ENCODE measurements at regions of chr3 and their contacts with region 1.

Region 1: GRCh38 chr3:33096093-33096868 is 665 bp downstream of the GLB1 start:
- H3K4me3 Mint-ChIP-seq: peak overlapping the region; percentile 97
- H3K27ac Mint-ChIP-seq: peak overlapping the region; percentile 98
- H3K4me1 Mint-ChIP-seq: peaks cover 51% of the 10 kb centered on the region
- H3K27me3 Mint-ChIP-seq: no peaks in the 10 kb centered on the region

Region 2: DNA sequence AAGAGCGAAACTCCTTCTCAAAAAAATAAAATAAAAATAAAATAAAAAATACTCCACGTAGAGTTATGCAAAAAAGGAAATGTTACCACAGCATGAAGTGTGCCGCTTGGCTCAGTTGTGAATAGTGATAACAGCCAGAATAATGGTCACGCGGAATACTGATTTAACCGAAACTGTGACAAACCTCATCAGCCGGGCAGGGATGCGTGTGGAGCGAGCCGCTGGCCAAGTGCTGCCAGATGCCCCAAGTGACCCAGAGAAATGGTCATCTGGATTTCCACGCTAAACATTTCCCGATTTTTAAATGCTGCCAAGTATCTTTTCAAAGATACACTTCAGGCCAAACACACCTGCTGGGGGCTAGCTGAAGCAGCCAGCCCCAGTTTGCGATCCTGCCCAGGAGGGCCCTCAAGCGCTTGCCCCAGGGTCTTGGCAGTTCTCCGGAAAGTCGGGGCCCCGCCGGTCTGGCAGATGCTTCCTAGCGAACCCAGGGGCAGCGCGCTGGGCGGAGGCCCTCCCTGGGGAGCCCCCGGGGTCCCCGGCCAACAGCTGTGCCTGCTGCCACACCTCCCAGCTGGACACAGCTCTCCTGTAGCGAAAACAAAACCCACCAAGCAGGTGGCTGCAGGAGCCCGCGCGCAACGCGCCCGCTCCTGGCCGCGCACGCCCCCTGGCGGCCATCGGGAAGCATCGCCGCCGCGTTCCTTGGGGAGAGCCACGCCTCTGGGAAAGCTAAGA is 628.8 kb before region 1 on chr3:
- intact Hi-C with region 1: no loop called
- H3K4me3 Mint-ChIP-seq: no peak overlapping the region
- H3K27ac Mint-ChIP-seq: no peak overlapping the region
- H3K4me1 Mint-ChIP-seq: peaks cover 60% of the 10 kb centered on the region
- H3K27me3 Mint-ChIP-seq: no peaks in the 10 kb centered on the region

Region 3: DNA sequence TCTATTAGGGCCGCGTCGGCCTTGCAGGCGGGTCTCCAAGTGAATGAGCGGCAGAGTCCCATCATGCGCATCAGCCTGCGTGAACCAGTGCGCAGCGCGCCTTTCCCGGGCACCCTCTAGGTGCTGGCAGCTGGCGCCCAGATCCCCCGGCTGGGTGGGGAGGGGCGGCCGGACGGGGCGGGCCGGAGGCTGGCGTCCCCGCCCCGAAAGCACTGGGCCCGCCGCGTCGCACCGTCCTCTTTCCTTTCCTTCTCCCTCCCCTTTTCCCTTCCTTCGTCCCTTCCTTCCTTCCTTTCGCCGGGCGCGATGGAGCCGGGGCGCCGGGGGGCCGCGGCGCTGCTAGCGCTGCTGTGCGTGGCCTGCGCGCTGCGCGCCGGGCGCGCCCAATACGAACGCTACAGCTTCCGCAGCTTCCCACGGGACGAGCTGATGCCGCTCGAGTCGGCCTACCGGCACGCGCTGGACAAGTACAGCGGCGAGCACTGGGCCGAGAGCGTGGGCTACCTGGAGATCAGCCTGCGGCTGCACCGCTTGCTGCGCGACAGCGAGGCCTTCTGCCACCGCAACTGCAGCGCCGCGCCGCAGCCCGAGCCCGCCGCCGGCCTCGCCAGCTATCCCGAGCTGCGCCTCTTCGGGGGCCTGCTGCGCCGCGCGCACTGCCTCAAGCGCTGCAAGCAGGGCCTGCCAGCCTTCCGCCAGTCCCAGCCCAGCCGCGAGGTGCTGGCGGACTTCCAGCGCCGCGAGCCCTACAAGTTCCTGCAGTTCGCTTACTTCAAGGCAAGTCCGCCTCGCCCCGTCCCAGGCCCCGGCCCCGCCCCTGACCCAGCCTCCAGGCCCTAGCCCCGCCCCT is 17.7 kb after region 1 on chr3 and contains the start of gene CRTAP:
- intact Hi-C with region 1: loop called (anchors 1 kb)
- H3K4me3 Mint-ChIP-seq: peak within 1 kb of the TSS; percentile 91
- H3K27ac Mint-ChIP-seq: peak within 1 kb of the TSS; percentile 91
- H3K4me1 Mint-ChIP-seq: peaks cover 53% of the 10 kb centered on the region
- H3K27me3 Mint-ChIP-seq: no peaks in the 10 kb centered on the region

Measured in dendritic cell treated with granulocyte-macrophage colony-stimulating factor and Interleukin-4, amounts not matched to agents 40 ng/mL and 50 ng/mL, for 4 days (primary cell).